Calu3 (cell line): ENCODE measurements at regions of chr3 and their contacts with region 1.

Region 1: GRCh38 chr3:30915782-30916181 is 21.3 kb upstream of the GADL1 start:
- DNase-seq: no peak
- H3K4me3 Mint-ChIP-seq: no peak overlapping the region
- H3K27ac Mint-ChIP-seq: no peak overlapping the region
- H3K4me1 Mint-ChIP-seq: no peaks in the 10 kb centered on the region
- H3K27me3 Mint-ChIP-seq: peaks cover 39% of the 10 kb centered on the region
- CTCF ChIP-seq: no peak

Region 2: DNA sequence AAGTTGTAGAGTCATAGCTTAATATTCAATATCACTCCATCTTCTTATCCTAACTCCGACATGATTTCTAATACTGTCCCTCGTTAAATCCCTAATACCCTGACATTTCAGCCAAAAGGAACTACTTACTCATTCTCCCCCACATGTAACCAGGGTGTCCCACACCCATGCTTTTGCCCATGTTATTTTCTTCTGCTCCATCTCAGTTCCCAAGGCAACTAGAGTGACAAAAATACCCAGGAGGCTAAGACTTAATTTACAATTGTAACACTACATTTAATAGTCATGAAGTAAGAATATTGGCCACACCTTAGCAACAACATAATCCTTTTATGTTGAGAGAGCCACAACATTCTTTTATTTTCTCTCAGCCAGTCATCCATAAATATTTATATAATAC is 557.9 kb before region 1 on chr3:
- CTCF ChIA-PET with region 1: no interaction called
- intact Hi-C with region 1: no loop called
- DNase-seq: no peak
- H3K4me3 Mint-ChIP-seq: no peak overlapping the region
- H3K27ac Mint-ChIP-seq: no peak overlapping the region
- H3K4me1 Mint-ChIP-seq: peaks cover 15% of the 10 kb centered on the region
- H3K27me3 Mint-ChIP-seq: no peaks in the 10 kb centered on the region
- CTCF ChIP-seq: no peak

Region 3: GRCh38 chr3:31010491-31010890 is 94.7 kb after region 1 on chr3:
- CTCF ChIA-PET with region 1: interaction called, 11 read pairs
- intact Hi-C with region 1: no loop called
- DNase-seq: no peak
- H3K4me3 Mint-ChIP-seq: no peak overlapping the region
- H3K27ac Mint-ChIP-seq: no peak overlapping the region
- H3K4me1 Mint-ChIP-seq: no peaks in the 10 kb centered on the region
- H3K27me3 Mint-ChIP-seq: peaks cover 22% of the 10 kb centered on the region
- CTCF ChIP-seq: no peak

Region 4: DNA sequence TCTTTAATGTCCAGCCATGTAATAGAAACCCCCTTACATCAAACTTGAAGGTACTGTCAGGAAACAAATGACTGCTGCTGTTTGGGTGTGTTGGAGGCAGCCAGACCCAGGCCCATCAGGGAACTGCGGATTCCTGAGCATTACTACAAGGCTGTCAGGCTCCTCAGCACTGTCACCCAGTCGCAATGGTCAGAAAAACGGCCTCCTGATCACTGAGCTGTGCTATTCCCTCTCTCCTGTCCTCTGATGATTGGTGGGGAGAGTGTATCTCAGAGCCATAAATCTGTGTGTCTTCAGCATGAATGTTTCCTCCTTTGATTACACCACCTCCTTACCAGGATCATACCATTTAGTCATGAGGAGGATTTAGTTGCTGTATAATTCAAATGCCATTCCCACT is 113.9 kb after region 1 on chr3:
- CTCF ChIA-PET with region 1: no interaction called
- intact Hi-C with region 1: no loop called
- DNase-seq: no peak
- H3K4me3 Mint-ChIP-seq: no peak overlapping the region
- H3K27ac Mint-ChIP-seq: no peak overlapping the region
- H3K4me1 Mint-ChIP-seq: no peaks in the 10 kb centered on the region
- H3K27me3 Mint-ChIP-seq: peaks cover 11% of the 10 kb centered on the region
- CTCF ChIP-seq: no peak